Activated B cell treated with CpG ODN at 0.5 μM for 24 hours (primary cell): ENCODE measurements at regions of chr3 and their contacts with region 1.

Region 1: GRCh38 chr3:20185701-20186598 is at the start of gene SGO1:
- DNase-seq: peak; percentile 100
- ATAC-seq: peak; percentile 93
- H3K4me3 Mint-ChIP-seq: no peak within 1 kb of the TSS
- H3K27ac Mint-ChIP-seq: no peak within 1 kb of the TSS
- H3K4me1 Mint-ChIP-seq: no peaks in the 10 kb centered on the region
- H3K27me3 Mint-ChIP-seq: no peaks in the 10 kb centered on the region
- CTCF ChIP-seq: no peak
- total RNA-seq, gene SGO1: 5.9 and 7.2 TPM in 2 replicates

Region 2: DNA sequence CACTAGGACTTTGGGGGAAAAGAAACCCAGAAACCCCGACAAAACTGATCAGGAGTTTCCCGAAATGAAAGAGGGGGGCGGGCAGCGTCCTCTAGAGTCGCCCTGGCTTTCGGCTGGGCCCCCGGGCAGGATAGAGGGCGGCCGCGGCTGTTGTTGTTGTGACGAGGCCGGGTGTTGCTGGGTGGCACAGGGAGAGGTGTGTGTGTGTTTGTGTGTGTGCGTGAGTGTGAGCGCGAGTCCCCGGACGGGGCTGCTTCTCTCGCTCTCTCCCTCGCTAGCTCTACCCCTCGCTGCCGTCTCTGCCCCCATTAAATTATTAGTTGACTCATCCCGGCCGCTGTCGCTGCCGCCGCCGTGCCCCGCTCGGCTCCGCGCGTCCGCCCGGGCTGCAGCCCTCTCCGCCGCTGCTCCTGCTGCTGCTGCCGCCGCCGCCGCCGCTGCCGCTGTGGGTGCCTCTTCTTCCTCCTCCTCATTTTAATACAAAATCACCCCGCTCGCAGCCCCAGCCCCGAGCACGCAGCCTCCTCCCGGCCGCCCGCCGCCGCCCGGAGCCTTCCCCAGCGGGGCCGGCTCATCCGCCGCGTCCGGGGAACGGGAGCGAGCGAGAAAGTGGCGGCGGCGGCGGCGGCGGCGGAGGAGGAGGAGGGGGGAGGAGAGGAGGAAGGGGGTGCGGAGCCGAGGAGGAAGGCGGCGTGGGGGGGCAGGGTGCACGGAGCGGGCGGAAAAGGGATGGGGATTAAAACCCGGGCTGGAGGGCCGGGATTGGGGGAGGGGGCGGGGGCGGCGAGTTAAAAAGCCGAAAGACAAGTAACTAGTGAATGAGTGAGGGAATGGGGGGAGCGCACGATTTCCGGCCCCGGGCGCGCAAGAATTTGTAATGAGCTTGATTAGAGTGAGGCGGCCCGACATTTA is 1761.0 kb before region 1 on chr3 and contains the start of gene SATB1:
- CTCF ChIA-PET with region 1: no interaction called
- POLR2A ChIA-PET with region 1: no interaction called
- intact Hi-C with region 1: loop called (anchors 5 kb)
- DNase-seq: peak; percentile 68
- ATAC-seq: peak; percentile 49
- H3K4me3 Mint-ChIP-seq: peak within 1 kb of the TSS; percentile 91
- H3K27ac Mint-ChIP-seq: peak within 1 kb of the TSS; percentile 87
- H3K4me1 Mint-ChIP-seq: peaks cover 40% of the 10 kb centered on the region
- H3K27me3 Mint-ChIP-seq: no peaks in the 10 kb centered on the region
- CTCF ChIP-seq: no peak
- total RNA-seq, gene SATB1: 23.0 and 30.8 TPM in 2 replicates

Region 3: DNA sequence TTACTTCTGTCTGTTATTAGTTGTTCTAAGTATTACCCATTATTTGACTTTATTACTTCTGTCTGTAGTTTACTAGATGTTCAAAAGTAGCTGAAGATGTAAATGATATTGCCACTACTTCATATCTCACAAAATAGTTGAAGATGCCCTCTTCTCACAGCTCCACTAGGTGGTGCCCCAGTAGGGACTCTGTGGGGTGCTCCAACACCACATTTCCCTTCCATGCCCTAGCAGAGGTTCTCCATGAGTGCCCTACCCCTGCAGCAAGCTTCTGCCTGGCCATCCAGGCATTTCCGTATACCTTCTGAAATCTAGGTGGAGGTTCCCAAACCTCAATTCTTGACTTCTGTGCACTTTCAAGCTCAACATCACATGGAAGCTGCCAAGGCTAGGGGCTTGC is 956.9 kb before region 1 on chr3:
- CTCF ChIA-PET with region 1: no interaction called
- POLR2A ChIA-PET with region 1: no interaction called
- intact Hi-C with region 1: loop called (anchors 5 kb)
- DNase-seq: no peak
- ATAC-seq: no peak
- H3K4me3 Mint-ChIP-seq: no peak overlapping the region
- H3K27ac Mint-ChIP-seq: peak overlapping the region; percentile 93
- H3K4me1 Mint-ChIP-seq: peaks cover 23% of the 10 kb centered on the region
- H3K27me3 Mint-ChIP-seq: no peaks in the 10 kb centered on the region
- CTCF ChIP-seq: no peak

Region 4: DNA sequence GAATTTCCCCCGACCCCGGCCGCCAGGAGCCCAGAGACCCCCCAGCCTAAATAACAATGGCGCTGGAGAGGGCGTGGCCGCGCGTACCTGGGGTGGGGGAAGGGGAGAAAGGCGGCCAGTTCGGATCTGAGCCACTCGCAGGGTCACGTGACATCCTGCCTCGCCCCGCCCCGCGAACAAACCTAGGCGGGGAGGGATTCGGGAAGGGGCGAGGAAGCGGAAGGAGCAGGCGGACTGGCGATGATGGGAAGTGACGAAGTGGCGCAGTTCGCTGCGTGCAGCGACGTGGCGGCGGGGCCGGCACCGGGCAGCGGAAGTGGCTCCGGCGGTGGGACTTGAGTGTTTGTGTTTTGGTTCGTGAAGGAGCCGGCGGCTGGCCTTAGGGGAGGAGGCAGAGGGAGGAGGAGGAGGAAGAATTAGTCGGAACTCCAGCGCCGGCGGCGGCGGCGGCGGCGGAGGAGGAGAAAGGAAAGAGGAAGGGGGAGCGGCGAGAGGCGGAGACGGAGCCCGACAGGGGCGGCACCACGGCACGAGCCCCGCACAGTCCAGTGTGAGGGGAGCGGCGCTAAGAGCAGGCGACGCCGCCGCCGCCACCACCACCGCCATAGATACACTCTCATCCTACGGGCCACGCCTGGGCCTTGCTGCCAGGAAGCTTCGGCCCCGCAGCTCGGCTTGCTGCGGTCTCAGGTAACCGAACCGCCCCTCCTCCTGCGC is 239.0 kb before region 1 on chr3 and contains the start of gene RAB5A:
- CTCF ChIA-PET with region 1: interaction called, 3 read pairs
- POLR2A ChIA-PET with region 1: interaction called, 5 read pairs
- intact Hi-C with region 1: loop called (anchors 1 kb)
- DNase-seq: peak; percentile 95
- ATAC-seq: peak; percentile 87
- H3K4me3 Mint-ChIP-seq: peak within 1 kb of the TSS; percentile 94
- H3K27ac Mint-ChIP-seq: peak within 1 kb of the TSS; percentile 96
- H3K4me1 Mint-ChIP-seq: peaks cover 47% of the 10 kb centered on the region
- H3K27me3 Mint-ChIP-seq: no peaks in the 10 kb centered on the region
- CTCF ChIP-seq: no peak
- total RNA-seq, gene RAB5A: 43.2 and 45.2 TPM in 2 replicates

Region 5: GRCh38 chr3:20104167-20104661 is 81.7 kb before region 1 on chr3:
- CTCF ChIA-PET with region 1: no interaction called
- POLR2A ChIA-PET with region 1: no interaction called
- intact Hi-C with region 1: no loop called
- DNase-seq: no peak
- ATAC-seq: peak; percentile 42
- H3K4me3 Mint-ChIP-seq: no peak overlapping the region
- H3K27ac Mint-ChIP-seq: peak overlapping the region; percentile 69
- H3K4me1 Mint-ChIP-seq: peaks cover 22% of the 10 kb centered on the region
- H3K27me3 Mint-ChIP-seq: no peaks in the 10 kb centered on the region
- CTCF ChIP-seq: no peak

Region 6: GRCh38 chr3:20125897-20126296 is 60.1 kb before region 1 on chr3:
- CTCF ChIA-PET with region 1: interaction called, 3 read pairs
- POLR2A ChIA-PET with region 1: interaction called, 32 read pairs
- intact Hi-C with region 1: loop called (anchors 1 kb)
- DNase-seq: peak; percentile 39
- ATAC-seq: peak; percentile 95
- H3K4me3 Mint-ChIP-seq: peak overlapping the region; percentile 58
- H3K27ac Mint-ChIP-seq: peak overlapping the region; percentile 87
- H3K4me1 Mint-ChIP-seq: peaks cover 38% of the 10 kb centered on the region
- H3K27me3 Mint-ChIP-seq: no peaks in the 10 kb centered on the region
- CTCF ChIP-seq: no peak

Region 7: GRCh38 chr3:20340324-20340928 is 154.5 kb after region 1 on chr3:
- CTCF ChIA-PET with region 1: no interaction called
- POLR2A ChIA-PET with region 1: no interaction called
- intact Hi-C with region 1: loop called (anchors 2 kb)
- DNase-seq: no peak
- ATAC-seq: peak; percentile 61
- H3K4me3 Mint-ChIP-seq: no peak overlapping the region
- H3K27ac Mint-ChIP-seq: no peak overlapping the region
- H3K4me1 Mint-ChIP-seq: peaks cover 12% of the 10 kb centered on the region
- H3K27me3 Mint-ChIP-seq: no peaks in the 10 kb centered on the region
- CTCF ChIP-seq: peak; percentile 42